ENCODE measurements at regions of chr12 and their contacts with region 1.

Region 1: DNA sequence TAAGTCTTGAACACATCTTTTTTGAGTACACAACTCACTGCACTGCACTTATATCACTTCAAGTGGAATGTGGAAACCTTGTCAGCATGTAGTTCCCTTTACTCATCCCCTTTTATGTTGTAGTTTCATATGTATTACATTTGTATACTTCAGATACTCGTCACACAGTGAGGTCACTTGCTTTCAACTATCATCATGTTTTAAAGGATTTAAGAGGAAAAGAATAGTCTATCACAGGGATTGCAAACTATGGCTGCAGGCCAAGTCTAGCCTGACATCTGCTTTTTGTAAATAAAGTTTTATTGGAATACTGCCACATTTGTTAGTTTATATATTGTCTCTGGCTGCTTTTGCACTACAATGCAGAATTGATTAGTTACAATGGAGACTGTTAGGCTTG is 24.3 kb downstream of the CNOT2 start:
- DNase-seq: no peak
- ATAC-seq: no peak
- H3K4me3 ChIP-seq: no peak overlapping the region
- H3K4me3 Mint-ChIP-seq: no peak overlapping the region
- H3K27ac ChIP-seq: no peak overlapping the region
- H3K27ac Mint-ChIP-seq: peak overlapping the region; percentile 18
- H3K4me1 ChIP-seq: peaks cover 26% of the 10 kb centered on the region
- H3K4me1 Mint-ChIP-seq: peaks cover 88% of the 10 kb centered on the region
- H3K27me3 ChIP-seq: no peaks in the 10 kb centered on the region
- H3K27me3 Mint-ChIP-seq: no peaks in the 10 kb centered on the region
- CTCF ChIP-seq: no peak

Region 2: GRCh38 chr12:70248876-70249275 is 18.7 kb before region 1 on chr12:
- CTCF ChIA-PET with region 1: no interaction called
- POLR2A ChIA-PET with region 1: interaction called, 3 read pairs
- intact Hi-C with region 1: loop called in 1 of 2 experiments (anchors 2 kb)
- DNase-seq: no peak
- ATAC-seq: no peak
- H3K4me3 ChIP-seq: no peak overlapping the region
- H3K4me3 Mint-ChIP-seq: no peak overlapping the region
- H3K27ac ChIP-seq: no peak overlapping the region
- H3K27ac Mint-ChIP-seq: no peak overlapping the region
- H3K4me1 ChIP-seq: peaks cover 71% of the 10 kb centered on the region
- H3K4me1 Mint-ChIP-seq: peaks cover 90% of the 10 kb centered on the region
- H3K27me3 ChIP-seq: no peaks in the 10 kb centered on the region
- H3K27me3 Mint-ChIP-seq: no peaks in the 10 kb centered on the region
- CTCF ChIP-seq: no peak

Region 3: DNA sequence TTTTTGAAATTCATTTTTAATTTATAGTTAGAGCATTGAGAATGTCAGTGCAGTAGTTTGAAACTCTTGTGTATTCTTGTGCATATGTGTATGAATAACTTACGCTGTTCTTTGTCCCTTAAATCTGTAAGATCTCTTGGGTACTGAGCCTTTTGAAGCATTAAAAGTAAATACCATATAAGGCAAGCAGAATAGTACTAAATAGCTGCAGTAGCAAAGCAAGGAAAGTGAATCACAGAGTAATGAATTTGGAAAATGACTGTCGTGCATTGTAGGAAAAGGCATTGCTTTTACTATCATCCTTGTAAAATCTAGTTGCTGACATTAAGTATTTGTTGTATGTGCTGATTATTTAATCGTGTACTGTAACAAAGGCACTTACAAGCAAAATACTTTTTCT is 12.2 kb before region 1 on chr12:
- CTCF ChIA-PET with region 1: no interaction called
- POLR2A ChIA-PET with region 1: interaction called, 3 read pairs
- intact Hi-C with region 1: loop called in 1 of 2 experiments (anchors 2 kb)
- DNase-seq: no peak
- ATAC-seq: no peak
- H3K4me3 ChIP-seq: no peak overlapping the region
- H3K4me3 Mint-ChIP-seq: peak overlapping the region; percentile 33
- H3K27ac ChIP-seq: no peak overlapping the region
- H3K27ac Mint-ChIP-seq: peak overlapping the region; percentile 43
- H3K4me1 ChIP-seq: peaks cover 47% of the 10 kb centered on the region
- H3K4me1 Mint-ChIP-seq: peaks cover 88% of the 10 kb centered on the region
- H3K27me3 ChIP-seq: no peaks in the 10 kb centered on the region
- H3K27me3 Mint-ChIP-seq: no peaks in the 10 kb centered on the region
- CTCF ChIP-seq: no peak

Region 4: GRCh38 chr12:70305794-70306193 is 38.2 kb after region 1 on chr12:
- CTCF ChIA-PET with region 1: no interaction called
- POLR2A ChIA-PET with region 1: no interaction called
- intact Hi-C with region 1: loop called in 1 of 2 experiments (anchors 1 kb)
- DNase-seq: no peak
- ATAC-seq: no peak
- H3K4me3 ChIP-seq: no peak overlapping the region
- H3K4me3 Mint-ChIP-seq: no peak overlapping the region
- H3K27ac ChIP-seq: no peak overlapping the region
- H3K27ac Mint-ChIP-seq: no peak overlapping the region
- H3K4me1 ChIP-seq: peaks cover 12% of the 10 kb centered on the region
- H3K4me1 Mint-ChIP-seq: peaks cover 59% of the 10 kb centered on the region
- H3K27me3 ChIP-seq: no peaks in the 10 kb centered on the region
- H3K27me3 Mint-ChIP-seq: no peaks in the 10 kb centered on the region
- CTCF ChIP-seq: no peak

Measured in CD8-positive, alpha-beta T cell (primary cell).